Calu3 (cell line): ENCODE measurements at regions of chr11 and their contacts with region 1.

Region 1: DNA sequence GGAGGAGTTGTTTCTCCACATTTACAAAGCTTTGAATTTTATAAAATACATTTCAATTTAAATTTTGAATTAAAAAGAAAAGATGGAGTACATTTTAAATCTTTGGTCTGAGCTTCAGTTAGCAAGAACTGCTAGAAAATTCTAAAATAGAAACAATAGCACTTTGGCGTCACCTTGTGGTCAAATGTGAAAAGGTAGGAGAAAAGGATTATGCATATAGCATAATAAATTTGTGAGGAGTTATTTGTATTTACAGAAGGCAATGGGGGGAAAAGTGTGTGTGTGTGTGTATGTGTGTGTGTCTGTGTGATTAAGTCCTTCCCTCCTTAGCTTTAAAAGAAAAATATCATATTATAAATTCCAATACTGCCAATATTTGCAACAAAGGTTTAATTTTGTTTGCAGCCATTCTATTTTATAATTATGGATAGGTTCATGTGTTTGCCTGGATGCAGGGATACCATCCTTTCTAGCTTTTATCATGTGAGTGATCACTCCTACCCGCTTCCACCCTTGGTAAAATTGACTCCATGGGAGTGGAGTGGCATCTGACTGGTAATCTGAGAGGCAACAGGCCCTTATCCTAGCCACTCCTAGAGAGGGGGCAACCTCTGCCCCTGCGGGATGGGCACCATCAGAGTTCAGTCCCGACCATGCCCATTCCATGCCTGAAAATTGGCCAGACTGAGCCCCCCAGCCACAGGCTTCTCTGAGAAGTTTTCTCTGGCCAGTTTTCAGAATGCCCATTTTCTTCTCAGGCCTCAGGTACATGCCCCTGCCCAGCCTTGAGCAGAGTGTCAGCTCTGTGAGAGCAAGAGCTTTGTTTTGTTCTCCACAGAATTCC is 13.6 kb upstream of the LGR4 start:
- DNase-seq: peak; percentile 62
- H3K4me3 Mint-ChIP-seq: no peak overlapping the region
- H3K27ac Mint-ChIP-seq: no peak overlapping the region
- H3K4me1 Mint-ChIP-seq: no peaks in the 10 kb centered on the region
- H3K27me3 Mint-ChIP-seq: no peaks in the 10 kb centered on the region
- CTCF ChIP-seq: peak; percentile 79

Region 2: GRCh38 chr11:26753723-26754504 is 732.2 kb before region 1 on chr11:
- CTCF ChIA-PET with region 1: no interaction called
- intact Hi-C with region 1: loop called (anchors 5 kb)
- DNase-seq: peak; percentile 44
- H3K4me3 Mint-ChIP-seq: no peak overlapping the region
- H3K27ac Mint-ChIP-seq: no peak overlapping the region
- H3K4me1 Mint-ChIP-seq: no peaks in the 10 kb centered on the region
- H3K27me3 Mint-ChIP-seq: peaks cover 11% of the 10 kb centered on the region
- CTCF ChIP-seq: peak; percentile 59

Region 3: GRCh38 chr11:27183672-27184457 is 302.3 kb before region 1 on chr11:
- CTCF ChIA-PET with region 1: interaction called, 25 read pairs
- intact Hi-C with region 1: loop called (anchors 1 kb)
- DNase-seq: peak; percentile 57
- H3K4me3 Mint-ChIP-seq: no peak overlapping the region
- H3K27ac Mint-ChIP-seq: no peak overlapping the region
- H3K4me1 Mint-ChIP-seq: peaks cover 10% of the 10 kb centered on the region
- H3K27me3 Mint-ChIP-seq: peaks cover 14% of the 10 kb centered on the region
- CTCF ChIP-seq: peak; percentile 51

Region 4: DNA sequence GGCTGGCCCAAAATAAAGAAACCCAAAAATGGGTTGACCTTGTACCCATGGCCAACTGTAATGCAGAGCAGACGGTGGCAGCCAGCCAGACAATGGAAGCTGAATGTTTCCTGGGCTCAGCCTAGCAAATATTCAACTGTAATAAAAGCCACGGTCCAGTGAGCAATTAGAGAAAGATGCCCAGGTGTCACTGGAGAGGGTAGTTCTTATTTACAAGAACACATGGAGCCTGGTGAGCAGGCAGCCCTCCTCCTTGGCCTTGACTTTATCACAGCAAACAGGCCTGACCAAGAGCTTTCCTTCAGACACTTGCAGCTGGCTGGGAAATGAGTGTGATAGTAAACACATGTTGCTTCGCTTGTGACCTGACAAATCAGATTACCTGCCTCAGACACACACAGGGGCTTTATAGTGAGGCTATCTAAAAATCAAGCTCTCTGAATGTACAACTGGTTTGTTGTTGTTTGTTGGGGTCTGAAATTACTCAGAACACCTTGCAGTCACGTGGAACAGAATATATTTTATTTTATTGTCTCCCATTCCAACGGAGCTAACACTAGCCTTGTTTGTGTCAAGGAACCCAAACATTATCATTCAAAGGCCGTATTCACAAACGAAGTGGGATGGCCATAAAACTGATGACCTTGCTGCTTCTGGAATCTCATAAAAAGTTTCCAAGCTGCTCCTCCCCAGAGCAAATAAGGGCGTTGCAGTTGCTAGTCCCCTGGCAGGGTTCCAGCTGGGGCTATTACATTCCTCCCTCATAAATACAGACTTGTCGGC is 284.5 kb before region 1 on chr11:
- CTCF ChIA-PET with region 1: interaction called, 6 read pairs
- intact Hi-C with region 1: loop called (anchors 5 kb)
- DNase-seq: peak; percentile 88
- H3K4me3 Mint-ChIP-seq: no peak overlapping the region
- H3K27ac Mint-ChIP-seq: no peak overlapping the region
- H3K4me1 Mint-ChIP-seq: peaks cover 22% of the 10 kb centered on the region
- H3K27me3 Mint-ChIP-seq: no peaks in the 10 kb centered on the region
- CTCF ChIP-seq: no peak

Region 5: GRCh38 chr11:27296497-27296896 is 189.7 kb before region 1 on chr11:
- CTCF ChIA-PET with region 1: interaction called, 15 read pairs
- intact Hi-C with region 1: loop called (anchors 1 kb)
- DNase-seq: peak; percentile 12
- H3K4me3 Mint-ChIP-seq: no peak overlapping the region
- H3K27ac Mint-ChIP-seq: no peak overlapping the region
- H3K4me1 Mint-ChIP-seq: peaks cover 17% of the 10 kb centered on the region
- H3K27me3 Mint-ChIP-seq: no peaks in the 10 kb centered on the region
- CTCF ChIP-seq: peak; percentile 29

Region 6: GRCh38 chr11:27313157-27313821 is 172.9 kb before region 1 on chr11:
- CTCF ChIA-PET with region 1: no interaction called
- intact Hi-C with region 1: loop called (anchors 5 kb)
- DNase-seq: no peak
- H3K4me3 Mint-ChIP-seq: peak overlapping the region; percentile 30
- H3K27ac Mint-ChIP-seq: peak overlapping the region; percentile 56
- H3K4me1 Mint-ChIP-seq: peaks cover 54% of the 10 kb centered on the region
- H3K27me3 Mint-ChIP-seq: no peaks in the 10 kb centered on the region
- CTCF ChIP-seq: no peak

Region 7: DNA sequence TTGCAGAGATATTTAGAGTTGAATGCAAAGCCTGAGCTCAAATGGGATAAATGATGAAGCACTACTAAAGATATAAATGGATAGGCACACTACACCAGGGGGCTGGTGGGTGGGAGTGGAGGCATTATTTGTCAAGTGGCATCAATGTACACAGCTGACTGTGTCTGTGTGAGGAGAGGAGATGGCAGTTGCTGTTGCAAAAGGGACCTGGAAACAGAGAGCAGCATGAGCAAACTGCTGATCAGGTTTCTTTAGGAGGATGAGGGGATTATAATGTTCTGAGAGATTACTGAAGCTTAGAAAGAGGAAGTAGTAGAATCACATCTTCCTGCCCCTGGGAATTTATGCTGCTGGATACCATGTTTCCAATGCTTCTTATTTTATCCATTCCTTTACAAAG is 59.8 kb after region 1 on chr11:
- CTCF ChIA-PET with region 1: no interaction called
- intact Hi-C with region 1: no loop called
- DNase-seq: no peak
- H3K4me3 Mint-ChIP-seq: no peak overlapping the region
- H3K27ac Mint-ChIP-seq: no peak overlapping the region
- H3K4me1 Mint-ChIP-seq: no peaks in the 10 kb centered on the region
- H3K27me3 Mint-ChIP-seq: no peaks in the 10 kb centered on the region
- CTCF ChIP-seq: no peak

Region 8: DNA sequence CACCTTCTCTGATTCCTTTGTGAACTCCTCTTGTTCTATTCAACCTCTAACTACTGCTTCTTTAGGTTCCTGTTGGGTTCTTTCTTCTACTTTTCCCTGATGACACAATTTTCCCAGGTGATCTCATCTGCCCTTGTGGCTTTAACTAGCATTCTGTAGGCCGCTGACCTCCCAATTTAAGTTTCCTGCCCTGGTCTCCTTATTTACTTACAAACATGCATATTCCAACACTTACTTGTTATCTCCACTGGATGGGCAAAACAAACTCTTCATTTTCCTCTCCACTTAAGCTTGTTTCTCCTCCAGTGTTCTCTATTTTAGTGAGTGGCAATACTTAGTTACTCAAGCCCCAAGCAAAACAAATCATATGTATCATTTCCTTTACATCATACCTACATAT is 1356.6 kb after region 1 on chr11:
- CTCF ChIA-PET with region 1: no interaction called
- intact Hi-C with region 1: no loop called
- DNase-seq: no peak
- H3K4me3 Mint-ChIP-seq: no peak overlapping the region
- H3K27ac Mint-ChIP-seq: no peak overlapping the region
- H3K4me1 Mint-ChIP-seq: peaks cover 10% of the 10 kb centered on the region
- H3K27me3 Mint-ChIP-seq: no peaks in the 10 kb centered on the region
- CTCF ChIP-seq: no peak